A549 (cell line): ENCODE measurements at regions of chr15 and their contacts with region 1.

Region 1: DNA sequence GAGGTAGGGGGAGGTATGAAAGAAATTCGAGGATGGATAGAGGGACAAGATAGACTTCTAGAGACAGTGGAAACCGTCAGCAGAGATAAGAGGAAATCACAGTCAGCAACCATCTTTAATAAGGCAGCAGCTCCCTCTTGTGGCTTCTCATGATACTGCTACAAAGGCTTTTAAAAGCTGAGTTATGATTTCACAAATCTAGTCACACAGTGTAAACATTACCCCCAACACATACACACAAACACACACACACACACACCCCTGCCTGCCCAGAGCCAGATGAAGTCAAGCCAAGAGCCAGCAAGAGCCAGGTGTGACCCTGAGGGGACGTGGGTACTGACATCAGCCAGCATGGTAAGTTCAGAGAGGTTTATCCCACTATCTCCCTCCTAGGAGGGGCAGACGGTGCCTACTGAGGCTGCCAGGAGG is 18.9 kb upstream of the TGM5 start:
- DNase-seq: peak; percentile 59 to 70
- ATAC-seq: peak; percentile 82 to 88
- H3K4me3 ChIP-seq: no peak overlapping the region; the same call in 2 of the 3 replicates
- H3K27ac ChIP-seq: peak overlapping the region in 1 of 2 experiments; percentile 56; a peak in 2 of 6 replicates
- H3K4me1 ChIP-seq: no peaks in the 10 kb centered on the region
- CTCF ChIP-seq: peak; percentile 79
- EP300 ChIP-seq: no peak
- POLR2A ChIP-seq: no peak
- RAD21 ChIP-seq: peak; percentile 79 to 85

Region 2: GRCh38 chr15:42903388-42904324 is 382.0 kb before region 1 on chr15:
- CTCF ChIA-PET with region 1: no interaction called
- POLR2A ChIA-PET with region 1: no interaction called
- DNase-seq: no peak
- ATAC-seq: no peak
- H3K4me3 ChIP-seq: no peak overlapping the region
- H3K27ac ChIP-seq: no peak overlapping the region
- H3K4me1 ChIP-seq: no peaks in the 10 kb centered on the region
- CTCF ChIP-seq: no peak
- EP300 ChIP-seq: no peak
- POLR2A ChIP-seq: no peak
- RAD21 ChIP-seq: no peak

Region 3: DNA sequence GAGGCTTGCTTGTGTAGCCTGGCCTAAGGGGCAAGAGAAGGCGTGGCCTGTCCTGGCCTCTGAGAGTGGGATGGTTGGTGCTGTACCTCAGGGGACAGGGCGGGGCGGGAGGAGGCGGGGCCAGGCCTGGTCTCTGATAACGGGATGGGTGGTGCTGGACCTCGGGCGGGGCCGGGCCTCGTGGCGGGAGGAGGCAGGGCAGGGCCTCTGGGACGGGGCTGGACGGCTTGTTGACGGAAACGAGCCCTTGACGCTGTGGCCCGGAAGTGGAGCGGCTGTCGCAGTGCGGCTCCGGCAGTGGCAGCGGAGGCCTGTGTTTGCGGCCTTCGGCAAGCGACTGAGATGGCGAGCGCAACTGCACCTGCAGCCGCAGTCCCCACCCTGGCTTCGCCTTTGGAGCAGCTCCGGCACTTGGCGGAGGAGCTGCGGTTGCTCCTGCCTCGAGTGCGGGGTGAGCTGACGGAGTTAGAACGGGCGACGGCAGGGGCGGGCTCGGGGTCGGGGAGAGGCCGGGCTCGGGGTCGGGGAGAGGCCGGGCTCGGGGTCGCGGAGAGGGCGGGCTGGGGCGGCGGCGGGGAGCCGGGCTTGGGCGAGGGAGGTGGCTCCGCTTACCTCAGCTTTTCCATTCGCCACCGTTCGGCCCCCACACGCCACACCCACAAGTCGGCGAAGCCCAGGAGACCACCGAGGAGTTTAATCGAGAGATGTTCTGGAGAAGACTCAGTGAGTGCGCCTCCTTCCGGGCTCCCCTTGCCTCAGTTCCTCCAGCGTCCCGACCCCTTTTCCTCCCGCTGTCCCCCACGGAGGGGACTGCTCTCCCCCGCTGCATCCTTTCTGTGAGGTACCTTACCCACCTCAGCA is 100.2 kb before region 1 on chr15 and contains the start of gene CCNDBP1:
- CTCF ChIA-PET with region 1: interaction called, 19 read pairs
- POLR2A ChIA-PET with region 1: no interaction called
- DNase-seq: peak; percentile 91 to 93
- ATAC-seq: peak; percentile 97 to 100
- H3K4me3 ChIP-seq: peak within 1 kb of the TSS; percentile 73
- H3K27ac ChIP-seq: peak within 1 kb of the TSS; percentile 84 to 95
- H3K4me1 ChIP-seq: peaks cover 6% of the 10 kb centered on the region; the same call in 2 of the 3 replicates
- CTCF ChIP-seq: peak; percentile 16; the same call in 1 of the 3 replicates
- EP300 ChIP-seq: no peak
- POLR2A ChIP-seq: peak; percentile 77
- RAD21 ChIP-seq: no peak
- polyA plus RNA-seq, gene CCNDBP1: 44.1 and 44.8 TPM in 2 replicates

Region 4: DNA sequence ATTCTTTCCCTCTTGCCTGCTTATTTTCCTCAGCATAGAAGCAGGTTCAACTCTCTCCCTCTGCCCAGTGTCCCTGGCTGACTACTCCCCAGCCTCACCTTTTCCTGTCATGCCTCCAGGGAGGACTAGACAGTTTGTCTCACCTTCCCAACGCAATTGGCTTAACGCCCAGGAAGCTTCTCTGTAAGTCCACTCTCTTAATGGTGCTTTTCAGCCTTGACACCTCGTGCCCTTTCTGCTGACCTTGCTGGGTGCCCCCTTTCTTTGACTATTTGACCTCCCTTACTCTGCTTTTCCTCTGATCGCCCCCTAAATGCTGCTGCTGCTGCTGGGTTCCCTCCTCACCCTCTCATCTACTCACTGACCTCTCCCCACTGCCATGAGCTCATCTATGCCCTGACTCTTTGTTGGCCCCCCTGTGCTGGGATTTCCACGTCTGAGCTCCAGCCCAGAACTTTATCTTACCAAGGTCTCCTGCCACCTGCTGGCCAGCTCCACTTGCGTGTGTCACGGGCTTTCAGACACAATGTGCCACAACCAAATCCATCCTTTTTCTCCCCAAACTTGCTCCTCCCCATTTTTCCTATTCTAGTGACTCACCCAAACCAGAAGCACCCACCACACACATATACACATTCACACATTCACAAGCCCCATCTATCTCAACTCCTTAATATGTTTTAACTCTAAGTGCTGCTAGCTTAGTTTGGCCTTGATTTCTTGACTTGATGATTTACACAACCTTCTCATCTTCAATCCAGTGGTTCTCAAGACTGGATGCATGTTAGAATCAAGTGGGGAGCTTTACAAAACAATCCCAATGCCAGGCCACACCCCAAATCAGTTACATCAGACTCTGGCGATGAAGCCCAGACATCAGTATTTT is 81.4 kb before region 1 on chr15:
- CTCF ChIA-PET with region 1: interaction called, 34 read pairs
- POLR2A ChIA-PET with region 1: no interaction called
- DNase-seq: peak; percentile 38 to 50
- ATAC-seq: peak; percentile 75 to 82
- H3K4me3 ChIP-seq: no peak overlapping the region
- H3K27ac ChIP-seq: no peak overlapping the region
- H3K4me1 ChIP-seq: no peaks in the 10 kb centered on the region
- CTCF ChIP-seq: peak; percentile 50
- EP300 ChIP-seq: no peak
- POLR2A ChIP-seq: no peak
- RAD21 ChIP-seq: peak; percentile 24 to 32; a peak in 3 of 5 replicates

Region 5: DNA sequence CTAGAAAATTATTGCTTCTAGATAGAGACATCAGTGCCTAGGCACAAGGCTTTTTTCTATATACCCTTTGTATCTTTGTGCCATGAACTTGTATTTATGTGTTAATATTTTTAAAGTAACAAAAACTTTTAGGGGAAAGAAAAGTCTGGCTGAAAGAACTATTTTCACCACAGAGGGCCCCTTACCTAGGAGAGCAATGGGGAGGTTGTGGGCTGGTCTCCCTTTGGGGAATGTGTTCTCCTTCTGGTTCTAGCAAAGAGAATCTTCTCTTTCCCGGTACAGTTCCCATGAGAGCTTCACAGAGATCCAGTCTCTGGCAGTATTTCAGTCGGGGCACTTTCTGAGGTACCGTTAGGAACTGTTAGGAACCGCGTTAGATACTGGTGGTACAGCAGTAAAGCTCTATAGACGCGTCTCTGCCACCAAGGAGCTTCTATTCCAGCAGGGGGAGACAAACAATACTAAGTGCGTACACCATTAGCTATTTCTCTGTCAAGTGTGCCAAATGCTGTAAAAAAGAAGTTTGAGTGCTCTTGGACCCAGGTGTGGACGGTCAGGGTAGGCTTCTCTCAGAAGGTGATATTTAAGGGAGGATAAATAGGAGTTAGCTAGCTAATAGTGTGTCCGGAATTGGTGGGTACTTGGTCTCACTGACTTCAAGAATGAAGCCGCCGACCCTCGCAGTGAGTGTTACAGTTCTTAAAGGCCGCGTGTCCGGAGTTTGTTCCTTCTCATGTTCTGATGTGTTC is 60.2 kb before region 1 on chr15:
- CTCF ChIA-PET with region 1: interaction called, 114 read pairs
- POLR2A ChIA-PET with region 1: interaction called, 6 read pairs
- DNase-seq: peak; percentile 42 to 52
- ATAC-seq: peak; percentile 98 to 100
- H3K4me3 ChIP-seq: no peak overlapping the region
- H3K27ac ChIP-seq: no peak overlapping the region
- H3K4me1 ChIP-seq: no peaks in the 10 kb centered on the region
- CTCF ChIP-seq: peak; percentile 56
- EP300 ChIP-seq: no peak
- POLR2A ChIP-seq: no peak
- RAD21 ChIP-seq: peak; percentile 56 to 65

Region 6: DNA sequence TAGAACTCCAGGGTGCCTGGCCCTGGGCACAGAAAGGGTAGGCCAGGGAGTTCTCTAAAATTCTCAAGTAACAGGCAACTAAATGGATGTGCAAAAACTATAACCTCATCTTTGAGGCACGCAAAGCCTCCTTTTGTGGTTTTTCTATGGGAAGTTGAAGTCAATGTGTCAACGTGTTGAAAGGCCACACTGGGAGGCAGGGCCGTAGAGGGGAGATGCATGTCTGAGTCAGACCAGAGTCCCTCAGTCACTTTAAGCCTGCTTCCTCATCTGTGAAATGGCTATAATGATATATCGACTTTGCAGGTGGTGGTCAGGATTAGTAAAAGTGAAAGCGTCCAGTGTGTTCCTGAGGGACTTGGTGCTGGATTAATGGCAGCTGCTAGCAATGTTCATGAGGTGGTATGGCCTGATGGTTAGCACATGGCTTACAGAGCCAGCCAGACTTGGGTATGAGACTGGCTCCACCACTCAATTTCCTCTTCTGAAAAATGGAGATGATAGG is 35.9 kb before region 1 on chr15:
- CTCF ChIA-PET with region 1: interaction called, 18 read pairs
- POLR2A ChIA-PET with region 1: no interaction called
- DNase-seq: no peak
- ATAC-seq: no peak
- H3K4me3 ChIP-seq: no peak overlapping the region
- H3K27ac ChIP-seq: no peak overlapping the region
- H3K4me1 ChIP-seq: no peaks in the 10 kb centered on the region
- CTCF ChIP-seq: no peak
- EP300 ChIP-seq: no peak
- POLR2A ChIP-seq: no peak
- RAD21 ChIP-seq: no peak

Region 7: GRCh38 chr15:43299411-43299810 is 13.8 kb after region 1 on chr15:
- CTCF ChIA-PET with region 1: interaction called, 18 read pairs
- POLR2A ChIA-PET with region 1: no interaction called
- DNase-seq: no peak
- ATAC-seq: no peak
- H3K4me3 ChIP-seq: no peak overlapping the region
- H3K27ac ChIP-seq: no peak overlapping the region
- H3K4me1 ChIP-seq: no peaks in the 10 kb centered on the region
- CTCF ChIP-seq: no peak
- EP300 ChIP-seq: no peak
- POLR2A ChIP-seq: no peak
- RAD21 ChIP-seq: no peak

Region 8: DNA sequence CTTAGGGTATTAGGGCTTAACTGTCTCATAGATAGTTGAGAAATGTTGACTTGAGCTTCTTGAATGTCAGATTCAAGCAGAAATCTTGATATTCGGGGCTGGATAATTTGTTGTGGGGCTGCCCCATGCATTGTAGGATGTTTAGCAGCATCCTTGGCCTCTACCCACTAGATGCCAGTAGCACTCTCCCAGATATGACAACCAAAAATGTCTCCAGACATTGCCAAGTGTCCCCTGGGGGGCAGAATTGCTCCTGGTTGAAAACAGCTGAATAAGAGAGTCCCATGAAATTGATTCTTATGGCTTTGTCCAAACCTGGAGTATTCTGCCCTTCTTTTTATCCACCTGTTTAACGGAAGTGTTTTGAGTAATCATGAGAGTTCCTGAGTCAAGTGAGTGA is 60.7 kb after region 1 on chr15:
- CTCF ChIA-PET with region 1: no interaction called
- POLR2A ChIA-PET with region 1: no interaction called
- DNase-seq: no peak
- ATAC-seq: no peak
- H3K4me3 ChIP-seq: no peak overlapping the region
- H3K27ac ChIP-seq: no peak overlapping the region
- H3K4me1 ChIP-seq: no peaks in the 10 kb centered on the region
- CTCF ChIP-seq: no peak; the same call in 2 of the 3 replicates
- EP300 ChIP-seq: no peak
- POLR2A ChIP-seq: no peak
- RAD21 ChIP-seq: 0 out of 5 replicates have a peak, but pooled peaks of 1 of the 2 experiments have one; percentile 3